Pancreas (tissue), 10 donors: ENCODE measurements at regions of chr1 and their contacts with region 1.

Region 1: GRCh38 chr1:94863919-94864318 is 43.8 kb downstream of the SLC44A3 start:
- DNase-seq: peak in 3 of 6 donors; percentile 60 to 71 (median 70)
- ATAC-seq: peak; percentile 80 to 91 (median 83)
- H3K4me3 ChIP-seq: no peak overlapping the region
- H3K27ac ChIP-seq: peak overlapping the region; percentile 72 to 97 (median 86)
- H3K4me1 ChIP-seq: peaks cover 39 to 45% (median 43%) of the 10 kb centered on the region in 3 donors
- H3K27me3 ChIP-seq: no peaks in the 10 kb centered on the region
- CTCF ChIP-seq: no peak

Region 2: DNA sequence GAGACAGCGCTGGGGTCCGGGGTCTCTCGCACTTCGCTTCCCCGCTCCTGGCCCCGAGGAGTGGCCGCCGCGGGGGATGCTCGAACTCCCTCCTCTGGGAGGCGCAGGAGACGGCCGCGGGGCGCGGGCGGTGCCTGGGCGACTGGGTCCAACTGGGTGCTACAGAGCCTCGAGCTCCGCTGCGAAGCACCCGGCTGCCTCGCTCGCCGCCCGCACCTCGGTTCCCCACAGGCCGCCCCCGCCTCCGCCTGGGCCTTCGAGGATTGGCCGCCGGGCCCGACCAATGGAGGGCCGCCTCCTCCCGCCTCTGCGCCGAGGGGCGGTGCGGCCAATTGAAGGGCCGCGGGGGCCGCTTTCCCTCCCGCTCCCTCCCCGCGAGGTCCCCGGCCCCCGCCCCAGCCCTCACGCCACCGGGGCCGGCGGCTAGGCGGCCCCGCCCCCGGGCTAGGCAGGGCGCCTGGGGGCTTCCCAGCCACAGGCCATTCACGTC is 63.0 kb after region 1 on chr1 and contains the start of gene CNN3:
- intact Hi-C with region 1: loop called in 1 of 3 experiments (anchors 10 kb)
- DNase-seq: peak; percentile 89 to 98 (median 92)
- ATAC-seq: peak; percentile 85 to 91 (median 88)
- H3K4me3 ChIP-seq: peak within 1 kb of the TSS; percentile 69 to 91 (median 75)
- H3K27ac ChIP-seq: peak within 1 kb of the TSS; percentile 90 to 99 (median 94)
- H3K4me1 ChIP-seq: peaks cover 0 to 41% (median 12%) of the 10 kb centered on the region in 3 donors
- H3K27me3 ChIP-seq: no peaks in the 10 kb centered on the region
- CTCF ChIP-seq: no peak
- total RNA-seq, gene CNN3: 31.7 to 143 (median 53.6) TPM